Endothelial cell of umbilical vein (primary cell): ENCODE measurements at regions of chr9 and their contacts with region 1.

Region 1: GRCh38 chr9:3906432-3907213 is 380.8 kb upstream of the RFX3 start:
- DNase-seq: peak; percentile 82
- H3K4me3 ChIP-seq: no peak overlapping the region
- H3K27ac ChIP-seq: no peak overlapping the region
- H3K4me1 ChIP-seq: peaks cover 12% of the 10 kb centered on the region
- H3K27me3 ChIP-seq: peaks cover 5 to 11% of the 10 kb centered on the region in 2 experiments
- CTCF ChIP-seq: no peak
- POLR2A ChIP-seq: no peak

Region 2: GRCh38 chr9:2923766-2924379 is 982.8 kb before region 1 on chr9:
- CTCF ChIA-PET with region 1: no interaction called
- POLR2A ChIA-PET with region 1: no interaction called
- dilution Hi-C with region 1: no loop called
- intact Hi-C with region 1: no loop called
- DNase-seq: no peak
- H3K4me3 ChIP-seq: no peak overlapping the region
- H3K27ac ChIP-seq: no peak overlapping the region
- H3K4me1 ChIP-seq: no peaks in the 10 kb centered on the region
- H3K27me3 ChIP-seq: no peaks in the 10 kb centered on the region
- CTCF ChIP-seq: no peak
- POLR2A ChIP-seq: no peak

Region 3: GRCh38 chr9:3868012-3868411 is 38.6 kb before region 1 on chr9:
- CTCF ChIA-PET with region 1: no interaction called
- POLR2A ChIA-PET with region 1: no interaction called
- dilution Hi-C with region 1: no loop called
- intact Hi-C with region 1: no loop called
- DNase-seq: no peak
- H3K4me3 ChIP-seq: no peak overlapping the region
- H3K27ac ChIP-seq: no peak overlapping the region
- H3K4me1 ChIP-seq: peaks cover 6% of the 10 kb centered on the region
- H3K27me3 ChIP-seq: peaks cover 0 to 16% of the 10 kb centered on the region in 2 experiments
- CTCF ChIP-seq: no peak
- POLR2A ChIP-seq: no peak

Region 4: GRCh38 chr9:3936520-3937235 is 30.1 kb after region 1 on chr9:
- CTCF ChIA-PET with region 1: no interaction called
- POLR2A ChIA-PET with region 1: no interaction called
- dilution Hi-C with region 1: no loop called
- intact Hi-C with region 1: loop called (anchors 2 kb)
- DNase-seq: peak; percentile 93
- H3K4me3 ChIP-seq: no peak overlapping the region
- H3K27ac ChIP-seq: peak overlapping the region; percentile 39
- H3K4me1 ChIP-seq: peaks cover 9% of the 10 kb centered on the region
- H3K27me3 ChIP-seq: peaks cover 0 to 3% of the 10 kb centered on the region in 2 experiments
- CTCF ChIP-seq: no peak
- POLR2A ChIP-seq: no peak